Dorsolateral prefrontal cortex (tissue), 120 donors: ENCODE measurements at regions of chr4 and their contacts with region 1.

Region 1: GRCh38 chr4:95835672-95836071 is 4.2 kb upstream of the PDHA2 start:
- DNase-seq: no peak
- H3K4me3 ChIP-seq: no peak overlapping the region
- H3K27ac ChIP-seq: no peak overlapping the region
- H3K27me3 ChIP-seq: no peaks in the 10 kb centered on the region
- CTCF ChIP-seq: peak in 34 of 56 donors; percentile 12 to 47 (median 33)

Region 2: DNA sequence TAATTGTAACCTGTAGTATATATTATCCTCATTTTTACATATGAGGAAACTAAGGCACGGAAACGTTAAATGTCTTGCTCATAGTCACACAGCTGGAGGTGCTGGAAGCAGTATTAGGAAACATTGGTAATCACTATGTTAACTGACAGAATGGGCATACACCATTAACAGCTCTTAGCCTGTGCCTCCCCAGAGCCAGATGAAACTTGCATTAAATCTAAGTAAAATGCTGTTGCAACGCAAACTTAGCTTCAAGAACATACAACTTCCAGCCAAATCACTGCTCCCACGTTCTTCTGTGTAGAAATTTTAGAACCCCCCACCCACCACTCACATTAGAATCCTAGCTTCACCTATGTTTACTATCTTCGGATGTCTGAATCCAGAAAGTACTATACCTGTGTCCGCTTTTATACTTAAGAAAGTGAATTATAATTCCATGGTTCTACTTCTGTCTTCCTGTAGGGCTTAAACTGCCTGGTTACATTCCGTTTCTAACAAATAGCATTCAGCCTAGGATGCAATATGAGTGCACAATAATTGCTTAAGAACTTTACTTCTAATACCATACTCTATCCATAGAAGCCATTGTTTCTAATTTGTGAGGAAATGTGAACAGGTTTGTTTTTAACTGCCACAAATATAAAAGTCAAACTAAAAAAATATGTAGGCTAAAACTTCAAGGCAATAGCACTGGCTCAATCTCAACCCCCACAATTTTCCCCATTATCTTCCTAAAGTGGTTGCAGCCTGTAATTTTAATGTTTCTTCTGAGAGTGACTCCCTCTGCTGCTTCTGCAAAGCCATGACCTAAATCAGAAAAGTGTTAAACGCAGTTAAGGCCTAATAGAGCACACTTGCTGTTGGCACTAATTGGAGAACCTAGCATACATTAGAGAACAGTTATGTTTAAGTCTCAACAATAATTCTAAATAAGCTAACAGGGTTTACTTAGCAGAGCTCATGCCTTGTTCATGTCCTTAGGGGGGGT is 291.3 kb before region 1 on chr4:
- intact Hi-C with region 1: loop called in 1 of 2 experiments (anchors 5 kb)
- DNase-seq: no peak
- H3K4me3 ChIP-seq: peak overlapping the region in 57 of 59 donors; percentile 5 to 94 (median 84)
- H3K27ac ChIP-seq: peak overlapping the region; percentile 35 to 100 (median 99)
- H3K27me3 ChIP-seq: no peaks in the 10 kb centered on the region
- CTCF ChIP-seq: peak in 52 of 56 donors; percentile 16 to 61 (median 46)